ENCODE measurements at regions of chr22 and their contacts with region 1.

Region 1: DNA sequence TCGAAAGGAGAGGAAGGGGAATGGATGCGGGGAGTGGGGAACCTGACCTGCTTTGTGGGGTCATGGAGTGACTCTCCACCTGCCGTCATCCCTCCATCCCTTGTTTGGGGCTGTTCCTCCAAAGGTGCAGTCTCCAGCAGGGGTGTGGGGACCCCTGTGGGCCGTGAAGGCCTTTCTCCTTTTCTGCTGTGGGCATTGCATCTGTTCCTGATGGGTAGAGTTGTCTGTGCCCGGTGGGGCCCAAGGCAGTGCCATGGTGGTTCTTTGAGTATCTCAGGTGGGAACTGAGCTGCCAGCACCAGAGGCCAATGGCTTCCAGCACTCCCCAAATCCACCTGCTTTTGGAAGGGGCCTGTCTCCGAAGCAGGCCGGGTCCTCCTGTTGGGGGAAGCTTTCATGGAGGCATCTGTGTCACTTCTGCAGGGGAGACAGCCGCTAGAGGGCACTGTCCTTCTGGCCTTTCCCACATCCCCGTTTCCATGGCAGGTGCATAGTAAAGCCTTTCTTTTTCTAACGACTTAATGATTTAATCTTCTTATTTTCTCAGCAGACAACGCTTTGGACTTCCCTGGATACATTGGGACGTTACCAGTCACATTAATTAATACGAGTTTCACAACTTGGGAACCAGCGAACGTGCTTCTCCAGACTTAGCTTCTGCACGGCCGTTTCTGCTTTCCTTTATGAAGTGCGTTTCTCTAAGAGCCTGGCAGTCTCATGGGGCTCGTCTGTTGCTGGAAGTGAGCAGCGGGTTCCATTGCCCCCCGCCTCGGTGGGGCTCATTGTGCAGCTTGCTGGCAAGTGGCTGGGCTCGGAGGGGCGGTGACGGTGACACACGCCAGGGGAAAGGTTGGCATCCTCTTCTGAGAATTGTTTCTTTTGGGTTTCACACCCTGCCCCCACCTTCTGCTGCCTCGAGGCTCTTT is 57.1 kb downstream of the PARVB start:
- DNase-seq: peak; percentile 55
- ATAC-seq: peak; percentile 49
- H3K4me3 Mint-ChIP-seq: no peak overlapping the region
- H3K27ac Mint-ChIP-seq: no peak overlapping the region
- H3K4me1 Mint-ChIP-seq: peaks cover 4% of the 10 kb centered on the region
- H3K27me3 Mint-ChIP-seq: no peaks in the 10 kb centered on the region
- CTCF ChIP-seq: peak; percentile 19

Region 2: DNA sequence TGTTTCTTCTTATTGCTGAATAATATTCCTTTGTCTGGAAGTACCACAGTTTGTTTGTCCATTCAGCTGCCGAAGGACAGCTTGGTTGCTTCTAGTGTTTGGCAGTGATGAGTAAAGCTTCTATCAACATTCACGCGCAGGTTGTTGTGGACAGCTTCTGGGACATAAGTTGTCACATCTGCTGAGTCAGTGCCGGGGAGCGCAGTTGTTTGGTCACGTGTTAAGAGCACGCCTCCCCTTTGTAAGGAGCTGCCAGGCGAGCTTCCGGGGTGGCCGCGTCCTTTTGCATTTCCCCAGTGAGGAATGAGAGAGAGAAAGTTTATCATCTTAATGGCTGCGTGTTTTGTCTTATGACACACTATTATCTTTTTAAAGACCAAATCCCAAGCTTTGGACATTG is 95.7 kb before region 1 on chr22:
- CTCF ChIA-PET with region 1: interaction called, 537 read pairs
- POLR2A ChIA-PET with region 1: no interaction called
- intact Hi-C with region 1: no loop called
- DNase-seq: no peak
- ATAC-seq: no peak
- H3K4me3 Mint-ChIP-seq: no peak overlapping the region
- H3K27ac Mint-ChIP-seq: no peak overlapping the region
- H3K4me1 Mint-ChIP-seq: no peaks in the 10 kb centered on the region
- H3K27me3 Mint-ChIP-seq: no peaks in the 10 kb centered on the region
- CTCF ChIP-seq: no peak

Region 3: DNA sequence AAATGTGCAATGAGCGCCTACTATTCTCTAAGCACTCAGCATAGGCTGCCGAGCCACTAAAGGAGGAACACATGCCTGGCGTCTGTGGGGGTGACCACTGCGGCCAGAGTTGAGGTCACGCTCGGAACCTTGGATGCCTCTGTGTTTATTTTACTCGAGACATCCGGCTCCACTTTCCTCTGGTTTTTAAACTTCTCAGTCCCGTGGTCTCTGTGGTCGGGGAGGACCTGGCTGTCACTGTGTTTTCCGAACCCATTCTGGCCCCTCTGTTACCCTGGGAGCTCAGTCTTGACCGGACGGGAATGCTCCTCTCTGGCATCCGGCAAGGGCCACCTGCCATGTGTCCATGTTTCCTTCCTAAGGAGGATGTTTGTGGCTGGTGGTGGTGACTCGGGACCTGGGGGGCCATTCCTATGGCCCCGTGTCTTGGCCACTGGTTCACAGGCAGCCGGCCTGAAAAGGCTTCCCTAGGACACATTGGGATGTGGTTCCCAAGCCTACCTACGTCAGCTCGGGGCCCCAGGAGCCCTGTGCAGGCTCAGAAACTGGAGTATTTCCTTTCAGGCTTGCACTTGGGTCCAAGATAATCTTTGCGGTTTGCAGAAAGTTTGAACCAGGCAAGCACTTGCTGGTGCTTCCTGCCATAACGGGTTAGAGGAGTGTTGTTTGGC is 52.8 kb after region 1 on chr22:
- CTCF ChIA-PET with region 1: no interaction called
- POLR2A ChIA-PET with region 1: no interaction called
- intact Hi-C with region 1: no loop called
- DNase-seq: no peak
- ATAC-seq: no peak
- H3K4me3 Mint-ChIP-seq: no peak overlapping the region
- H3K27ac Mint-ChIP-seq: no peak overlapping the region
- H3K4me1 Mint-ChIP-seq: no peaks in the 10 kb centered on the region
- H3K27me3 Mint-ChIP-seq: no peaks in the 10 kb centered on the region
- CTCF ChIP-seq: no peak

Region 4: GRCh38 chr22:44145544-44145943 is 64.3 kb after region 1 on chr22:
- CTCF ChIA-PET with region 1: no interaction called
- POLR2A ChIA-PET with region 1: no interaction called
- intact Hi-C with region 1: no loop called
- DNase-seq: no peak
- ATAC-seq: no peak
- H3K4me3 Mint-ChIP-seq: no peak overlapping the region
- H3K27ac Mint-ChIP-seq: no peak overlapping the region
- H3K4me1 Mint-ChIP-seq: peaks cover 4% of the 10 kb centered on the region
- H3K27me3 Mint-ChIP-seq: no peaks in the 10 kb centered on the region
- CTCF ChIP-seq: no peak

Measured in activated B cell treated with CpG ODN at 0.5 μM for 24 hours (primary cell).